Uterus (tissue), 4 donors: ENCODE measurements at regions of chr19 and their contacts with region 1.

Region 1: GRCh38 chr19:11987405-11988281 is 22.8 kb downstream of the ZNF763 start:
- DNase-seq: peak; percentile 91 to 95
- H3K4me3 ChIP-seq: peak overlapping the region; percentile 69 to 77
- H3K27ac ChIP-seq: peak overlapping the region; percentile 81 to 87
- H3K4me1 ChIP-seq: no peaks in the 10 kb centered on the region
- H3K27me3 ChIP-seq: no peaks in the 10 kb centered on the region
- CTCF ChIP-seq: peak in 1 of 4 experiments; percentile 7
- POLR2A ChIP-seq: peak; percentile 54 to 60

Region 2: GRCh38 chr19:11699931-11700794 is 287.5 kb before region 1 on chr19:
- intact Hi-C with region 1: no loop called
- DNase-seq: no peak
- H3K4me3 ChIP-seq: no peak overlapping the region
- H3K27ac ChIP-seq: no peak overlapping the region
- H3K4me1 ChIP-seq: no peaks in the 10 kb centered on the region
- H3K27me3 ChIP-seq: no peaks in the 10 kb centered on the region
- CTCF ChIP-seq: peak; percentile 35 to 58 (median 54)
- POLR2A ChIP-seq: no peak

Region 3: DNA sequence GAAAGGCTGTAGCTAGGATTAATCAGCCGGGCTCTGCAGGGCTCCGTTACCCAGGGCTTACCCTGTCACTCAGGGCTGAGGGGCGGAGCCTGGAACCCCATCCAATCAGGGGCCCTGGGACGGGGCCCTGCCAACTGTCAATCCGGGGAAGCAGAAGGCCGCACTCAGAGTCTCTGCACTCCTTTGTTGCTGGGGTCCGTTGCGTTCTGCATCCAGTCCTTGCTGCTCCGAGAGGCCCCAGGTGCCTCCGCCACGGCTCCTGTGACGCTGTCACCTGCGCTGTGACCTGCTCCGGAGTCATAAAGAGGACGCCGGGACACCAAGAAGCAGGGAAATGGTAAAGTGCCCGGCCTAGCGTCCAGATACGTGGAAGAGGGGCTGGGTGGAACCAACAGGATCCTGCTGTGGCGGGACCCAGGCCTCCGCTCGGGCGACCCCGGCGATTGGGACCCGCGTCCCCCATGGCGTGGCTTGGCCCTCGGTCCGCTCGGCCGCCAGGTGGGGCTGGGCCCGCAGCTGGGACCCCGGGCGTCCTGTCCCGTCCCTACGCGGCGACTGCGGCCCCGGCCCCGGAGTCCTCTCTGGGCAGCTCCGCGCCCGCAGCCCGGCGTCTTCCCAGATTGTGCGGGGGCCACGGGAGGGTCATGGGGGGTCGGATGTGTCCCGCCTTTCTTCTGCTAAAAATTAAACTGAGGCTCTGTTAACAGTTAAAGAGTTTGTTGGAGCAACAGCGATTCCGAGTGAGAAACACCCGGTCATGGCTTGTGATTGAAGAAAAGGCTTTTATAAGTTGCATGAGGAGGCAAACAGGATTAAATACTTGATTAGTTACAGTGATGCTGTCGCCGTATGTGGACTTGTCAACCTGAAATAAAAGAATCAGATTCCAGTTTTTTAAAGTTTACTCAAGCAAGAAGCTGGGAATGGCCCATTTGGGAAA is 189.0 kb before region 1 on chr19 and contains the start of gene ZNF491:
- intact Hi-C with region 1: loop called (anchors 5 kb)
- DNase-seq: peak; percentile 87 to 91
- H3K4me3 ChIP-seq: peak within 1 kb of the TSS; percentile 41 to 69
- H3K27ac ChIP-seq: peak within 1 kb of the TSS; percentile 67 to 76
- H3K4me1 ChIP-seq: no peaks in the 10 kb centered on the region
- H3K27me3 ChIP-seq: no peaks in the 10 kb centered on the region
- CTCF ChIP-seq: peak in 3 of 4 experiments; percentile 22 to 32 (median 23)
- POLR2A ChIP-seq: peak; percentile 60 to 79
- total RNA-seq, gene ZNF491: 0.59 to 10.9 (median 4.2) TPM

Region 4: GRCh38 chr19:11924886-11925650 is 62.6 kb before region 1 on chr19 and contains the start of gene ZNF700:
- intact Hi-C with region 1: loop called (anchors 2 kb)
- DNase-seq: peak; percentile 94 to 96
- H3K4me3 ChIP-seq: peak within 1 kb of the TSS; percentile 65 to 91
- H3K27ac ChIP-seq: peak within 1 kb of the TSS; percentile 90 to 92
- H3K4me1 ChIP-seq: peaks cover 0 to 6% of the 10 kb centered on the region in 2 donors
- H3K27me3 ChIP-seq: no peaks in the 10 kb centered on the region
- CTCF ChIP-seq: no peak
- POLR2A ChIP-seq: peak; percentile 49 to 56
- total RNA-seq, gene ZNF700: 9.7 to 21.2 (median 17.7) TPM

Region 5: DNA sequence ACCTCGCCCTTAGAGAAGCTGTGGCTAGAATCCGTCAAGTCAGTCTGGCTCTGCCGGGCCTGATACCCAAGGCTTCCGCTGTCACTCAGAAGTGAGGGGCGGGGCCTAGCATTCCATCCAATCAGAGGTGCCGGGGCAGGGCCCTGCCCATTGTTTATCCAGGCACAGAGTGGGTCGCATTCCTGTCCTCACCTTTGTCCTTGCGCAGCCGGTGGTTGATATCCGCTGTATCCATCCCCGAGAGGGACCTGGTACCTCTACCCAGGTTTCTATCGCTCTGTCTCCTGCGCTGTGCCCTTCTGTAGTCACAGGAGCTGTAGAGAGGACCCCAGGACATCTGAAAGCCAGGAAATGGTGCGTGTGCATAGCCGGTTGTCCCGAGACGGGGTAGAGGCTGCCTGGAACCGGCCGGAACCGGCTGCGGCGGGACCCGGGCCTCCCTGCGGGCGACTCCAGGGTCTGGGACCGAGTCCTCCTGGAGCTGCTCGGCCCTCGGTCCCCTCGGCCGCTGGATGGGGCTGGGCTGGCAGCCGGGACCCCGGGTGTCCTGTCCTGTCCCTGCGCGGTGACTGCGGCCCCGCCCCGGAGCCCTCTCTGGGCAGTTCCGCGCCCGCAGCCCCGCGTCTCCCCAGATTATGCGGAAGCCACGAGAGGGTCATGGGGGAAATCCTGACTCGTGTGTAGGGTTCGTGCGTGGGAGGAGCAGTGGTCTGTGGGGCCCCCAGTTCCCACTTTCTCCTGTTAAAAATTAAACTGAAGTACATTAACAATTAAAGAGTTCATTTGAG is 22.6 kb before region 1 on chr19 and contains the start of gene ZNF763:
- intact Hi-C with region 1: loop called (anchors 2 kb)
- DNase-seq: peak; percentile 91 to 93
- H3K4me3 ChIP-seq: peak within 1 kb of the TSS; percentile 52 to 79
- H3K27ac ChIP-seq: peak within 1 kb of the TSS; percentile 89 to 99
- H3K4me1 ChIP-seq: peaks cover 0 to 6% of the 10 kb centered on the region in 2 donors
- H3K27me3 ChIP-seq: no peaks in the 10 kb centered on the region
- CTCF ChIP-seq: peak in 1 of 4 experiments; percentile 17
- POLR2A ChIP-seq: peak; percentile 50 to 63
- total RNA-seq, gene ZNF763: 0.88 to 6.0 (median 1.7) TPM

Region 6: DNA sequence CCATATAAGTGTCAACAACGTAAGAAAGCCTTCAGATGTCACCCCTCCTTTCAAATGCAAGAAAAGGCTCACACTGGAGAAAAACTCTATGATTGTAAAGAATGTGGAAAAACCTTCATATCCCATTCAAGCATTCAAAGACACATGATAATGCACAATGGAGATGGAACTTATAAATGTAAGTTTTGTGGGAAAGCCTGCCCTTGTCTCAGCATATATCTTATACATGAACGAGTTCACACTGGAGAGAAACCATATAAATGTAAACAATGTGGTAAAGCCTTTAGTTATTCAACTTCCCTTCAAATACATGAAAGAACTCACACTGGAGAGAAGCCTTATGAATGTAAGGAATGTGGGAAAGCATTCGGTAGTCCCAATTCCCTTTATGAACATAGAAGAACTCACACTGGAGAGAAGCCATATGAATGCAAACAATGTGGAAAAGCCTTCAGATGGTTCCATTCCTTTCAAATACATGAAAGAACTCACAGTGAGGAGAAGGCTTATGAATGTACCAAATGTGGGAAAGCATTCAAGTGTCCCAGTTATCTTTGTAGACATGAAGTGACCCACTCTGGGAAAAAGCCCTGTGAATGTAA is 88.0 kb after region 1 on chr19:
- intact Hi-C with region 1: no loop called
- DNase-seq: no peak
- H3K4me3 ChIP-seq: no peak overlapping the region
- H3K27ac ChIP-seq: no peak overlapping the region
- H3K4me1 ChIP-seq: no peaks in the 10 kb centered on the region
- H3K27me3 ChIP-seq: no peaks in the 10 kb centered on the region
- CTCF ChIP-seq: no peak
- POLR2A ChIP-seq: no peak